Endothelial cell of umbilical vein (primary cell): ENCODE measurements at regions of chr2 and their contacts with region 1.

Region 1: DNA sequence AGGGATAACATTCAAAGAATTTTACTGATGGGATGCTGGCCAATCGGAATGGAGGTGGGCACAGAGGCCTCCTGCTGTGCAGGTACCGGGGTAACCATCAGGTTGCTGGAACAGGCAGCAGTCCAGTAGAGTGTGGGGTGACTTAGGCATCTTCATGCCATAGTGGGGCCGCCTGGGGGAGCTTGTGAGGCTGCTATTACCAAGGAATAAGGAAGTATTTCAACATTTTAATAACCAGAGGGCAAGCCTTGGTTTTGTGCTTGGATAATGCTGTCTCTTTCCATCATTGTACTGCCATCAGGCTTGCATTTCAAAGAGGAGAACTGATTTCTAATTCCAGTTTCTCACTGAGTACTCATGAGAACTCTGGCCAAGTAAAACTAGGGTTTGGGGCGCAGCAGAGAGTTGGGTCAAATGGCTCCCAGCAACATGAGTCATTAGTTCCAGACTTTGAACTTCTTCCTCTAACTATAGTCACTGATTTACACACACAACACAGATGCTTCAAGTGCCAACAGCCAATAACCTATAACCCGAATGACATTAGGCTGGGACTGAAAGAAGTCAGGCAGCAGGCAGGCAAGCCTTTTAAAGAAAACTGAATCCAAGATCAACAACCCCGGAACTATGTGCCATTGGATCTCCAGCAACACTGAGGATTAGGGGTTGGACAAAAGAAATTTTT is 56.1 kb upstream of the FHL2 start:
- DNase-seq: peak; percentile 72
- H3K4me3 ChIP-seq: no peak overlapping the region
- H3K27ac ChIP-seq: peak overlapping the region; percentile 22
- H3K4me1 ChIP-seq: peaks cover 9% of the 10 kb centered on the region
- H3K27me3 ChIP-seq: no peaks in the 10 kb centered on the region
- CTCF ChIP-seq: peak; percentile 11 to 46
- POLR2A ChIP-seq: no peak

Region 2: DNA sequence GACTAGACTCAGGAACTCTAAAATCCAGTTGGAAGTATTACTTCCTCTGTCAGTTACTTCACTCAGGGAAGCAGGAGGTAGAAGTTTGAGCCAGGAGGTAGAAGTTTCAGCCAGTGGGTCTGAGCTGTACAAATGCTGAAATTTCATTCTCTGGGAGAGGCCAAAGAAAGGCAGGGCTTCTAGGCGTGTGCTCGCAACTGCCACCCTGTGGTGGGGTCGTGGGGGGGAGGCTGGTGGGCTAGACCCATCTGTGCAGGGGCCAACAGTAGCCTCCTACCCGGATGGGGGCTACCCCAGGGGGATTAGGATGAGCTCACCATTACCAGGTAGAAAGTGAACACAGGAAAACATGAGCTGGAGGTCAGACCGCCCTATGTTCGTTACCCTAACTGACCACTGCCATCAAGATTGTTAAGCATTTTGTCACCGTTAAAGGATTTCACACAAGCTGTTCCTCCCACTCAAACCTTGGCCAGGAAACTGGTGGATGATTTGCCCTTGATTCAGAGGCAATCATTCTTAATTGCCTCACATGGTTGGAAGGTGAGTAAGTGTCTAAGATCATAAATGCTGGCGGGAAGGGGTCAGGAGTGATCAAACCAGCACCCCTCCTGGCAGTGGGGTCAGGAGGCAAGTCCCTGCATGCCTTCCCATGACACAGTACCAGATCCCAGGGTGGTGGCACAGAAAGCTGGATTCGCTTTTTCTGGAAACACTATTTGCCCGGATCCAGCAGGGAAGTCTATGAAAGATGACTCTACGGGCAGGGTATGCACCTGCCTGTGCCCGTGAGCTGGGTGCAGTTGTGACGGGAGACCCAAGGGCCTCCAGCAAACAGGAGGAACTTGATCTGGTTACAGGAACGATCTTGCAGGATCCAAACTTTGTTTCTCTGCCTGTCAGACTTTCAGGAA is 50.9 kb before region 1 on chr2:
- CTCF ChIA-PET with region 1: interaction called, 5 read pairs
- POLR2A ChIA-PET with region 1: no interaction called
- dilution Hi-C with region 1: no loop called
- intact Hi-C with region 1: loop called (anchors 2 kb)
- DNase-seq: peak; percentile 86
- H3K4me3 ChIP-seq: no peak overlapping the region
- H3K27ac ChIP-seq: peak overlapping the region; percentile 66
- H3K4me1 ChIP-seq: peaks cover 40% of the 10 kb centered on the region
- H3K27me3 ChIP-seq: no peaks in the 10 kb centered on the region
- CTCF ChIP-seq: peak; percentile 48 to 62
- POLR2A ChIP-seq: peak; percentile 10

Region 3: DNA sequence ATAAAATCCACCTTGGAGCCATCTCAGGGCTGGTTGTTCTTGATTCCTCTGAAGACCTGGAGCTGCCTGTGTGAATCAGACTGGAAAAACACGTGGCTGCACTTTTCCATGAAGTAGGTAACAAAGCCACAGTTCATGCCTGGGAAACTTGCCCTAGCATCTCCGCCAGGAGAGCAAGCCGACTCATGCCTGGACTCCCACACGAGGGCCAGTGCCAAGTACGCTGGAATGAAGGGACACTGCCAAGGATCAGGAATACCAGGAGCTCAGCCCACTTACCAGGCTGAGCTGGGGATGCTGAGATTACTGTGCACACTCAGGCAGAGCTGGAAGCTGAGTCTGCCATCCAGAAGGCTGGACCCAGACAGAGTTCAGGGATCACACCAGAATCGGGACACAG is 45.2 kb before region 1 on chr2:
- CTCF ChIA-PET with region 1: interaction called, 5 read pairs
- POLR2A ChIA-PET with region 1: no interaction called
- dilution Hi-C with region 1: no loop called
- intact Hi-C with region 1: loop called (anchors 1 kb)
- DNase-seq: peak; percentile 91
- H3K4me3 ChIP-seq: no peak overlapping the region
- H3K27ac ChIP-seq: peak overlapping the region; percentile 52
- H3K4me1 ChIP-seq: peaks cover 32% of the 10 kb centered on the region
- H3K27me3 ChIP-seq: peaks cover 0 to 6% of the 10 kb centered on the region in 2 experiments
- CTCF ChIP-seq: no peak
- POLR2A ChIP-seq: no peak

Region 4: DNA sequence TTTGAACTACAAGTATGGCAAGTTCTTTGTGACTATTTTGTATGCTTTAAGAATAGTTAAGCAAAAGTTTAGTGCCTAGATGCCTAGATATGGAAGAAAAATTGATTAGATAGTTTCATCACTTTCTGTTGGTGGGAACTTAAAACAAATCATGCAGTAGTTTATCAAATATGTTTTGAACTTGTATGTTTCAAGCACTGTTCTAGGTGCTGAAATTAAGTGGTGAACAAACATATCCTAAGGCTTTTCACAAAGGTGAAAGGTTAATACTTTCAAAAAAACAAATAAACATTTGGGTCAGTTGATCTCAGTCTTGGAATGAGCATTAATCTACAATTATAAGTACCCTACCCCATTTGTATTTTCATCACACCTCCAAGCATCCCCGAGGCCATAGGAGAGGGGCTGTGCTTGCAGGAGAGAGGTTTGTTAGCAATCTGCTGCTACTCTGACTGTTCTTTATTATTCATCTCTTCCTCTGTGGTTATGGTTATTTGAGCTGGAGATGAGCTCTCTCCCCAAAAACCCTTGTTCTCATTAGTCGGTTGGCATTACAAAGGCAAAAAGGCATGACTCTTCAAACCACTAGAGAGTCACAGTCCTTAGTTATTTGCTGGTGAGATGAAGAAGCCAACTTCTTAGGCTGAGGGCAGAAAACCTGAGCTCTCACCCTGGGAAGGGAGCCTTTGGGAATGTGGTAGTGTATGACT is 47.8 kb after region 1 on chr2:
- CTCF ChIA-PET with region 1: no interaction called
- POLR2A ChIA-PET with region 1: no interaction called
- dilution Hi-C with region 1: no loop called
- intact Hi-C with region 1: no loop called
- DNase-seq: no peak
- H3K4me3 ChIP-seq: no peak overlapping the region
- H3K27ac ChIP-seq: no peak overlapping the region
- H3K4me1 ChIP-seq: no peaks in the 10 kb centered on the region
- H3K27me3 ChIP-seq: peaks cover 10 to 11% of the 10 kb centered on the region in 2 experiments
- CTCF ChIP-seq: no peak
- POLR2A ChIP-seq: no peak